ENCODE measurements at regions of chr3 and their contacts with region 1.

Region 1: GRCh38 chr3:142595951-142596725 is at the start of gene PLS1:
- DNase-seq: peak; percentile 88 to 97
- H3K4me3 ChIP-seq: peak within 1 kb of the TSS; percentile 63
- H3K4me3 Mint-ChIP-seq: peak within 1 kb of the TSS; percentile 91
- H3K27ac Mint-ChIP-seq: peak within 1 kb of the TSS; percentile 61
- H3K4me1 ChIP-seq: peaks cover 22% of the 10 kb centered on the region; the same call in 1 of the 2 replicates
- H3K4me1 Mint-ChIP-seq: peaks cover 14% of the 10 kb centered on the region
- H3K27me3 ChIP-seq: no peaks in the 10 kb centered on the region
- H3K27me3 Mint-ChIP-seq: no peaks in the 10 kb centered on the region
- CTCF ChIP-seq: no peak
- total RNA-seq, gene PLS1: 19.2 and 23.6 TPM in 2 replicates

Region 2: GRCh38 chr3:142530296-142530695 is 65.8 kb before region 1 on chr3:
- CTCF ChIA-PET with region 1: no interaction called
- POLR2A ChIA-PET with region 1: no interaction called
- intact Hi-C with region 1: no loop called
- DNase-seq: no peak
- H3K4me3 ChIP-seq: no peak overlapping the region
- H3K4me3 Mint-ChIP-seq: no peak overlapping the region
- H3K27ac Mint-ChIP-seq: no peak overlapping the region
- H3K4me1 ChIP-seq: no peaks in the 10 kb centered on the region
- H3K4me1 Mint-ChIP-seq: no peaks in the 10 kb centered on the region
- H3K27me3 ChIP-seq: no peaks in the 10 kb centered on the region
- H3K27me3 Mint-ChIP-seq: no peaks in the 10 kb centered on the region
- CTCF ChIP-seq: no peak

Region 3: DNA sequence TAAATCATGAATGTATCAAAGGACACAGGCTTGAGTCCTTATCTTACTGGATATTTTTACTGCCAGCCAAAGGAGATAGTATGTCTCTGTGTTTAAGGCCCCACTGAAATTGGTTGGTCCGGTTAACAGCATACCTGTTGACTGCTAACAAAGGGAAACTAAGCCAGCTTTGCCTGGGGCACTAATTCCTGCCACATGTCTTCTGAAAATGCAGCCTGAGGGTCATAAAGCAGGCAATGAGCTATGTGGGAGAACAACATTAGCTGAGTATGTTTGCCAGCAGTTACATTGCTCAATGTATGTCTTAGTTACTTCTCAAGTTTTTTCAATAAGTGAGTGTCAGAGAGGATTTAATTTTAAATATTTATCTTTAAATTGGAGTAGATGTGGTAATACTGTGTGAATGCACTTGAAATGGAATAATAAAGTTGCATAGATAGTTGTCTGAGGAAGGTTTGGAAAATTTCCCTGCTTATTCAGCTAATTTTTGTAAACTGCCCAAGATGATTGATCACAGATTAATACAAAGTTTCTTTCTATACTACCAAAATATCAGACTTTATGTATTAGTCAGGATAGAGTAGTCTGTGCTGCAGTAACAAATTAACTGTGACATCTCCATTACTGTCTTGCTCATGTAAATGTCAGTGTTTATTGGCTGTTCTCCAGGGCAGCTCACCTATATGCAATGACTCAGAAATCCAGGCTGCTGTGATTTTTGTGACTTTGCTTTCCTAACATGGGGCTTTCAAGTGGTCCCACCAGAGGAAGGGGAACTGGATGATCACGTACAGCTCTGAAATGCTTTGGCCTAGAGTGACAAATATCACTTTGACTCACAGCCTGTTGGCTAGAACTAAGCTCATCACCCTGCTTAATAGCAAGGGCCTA is 12.8 kb after region 1 on chr3:
- CTCF ChIA-PET with region 1: no interaction called
- POLR2A ChIA-PET with region 1: interaction called, 5 read pairs
- intact Hi-C with region 1: loop called (anchors 1 kb)
- DNase-seq: peak; percentile 85 to 89
- H3K4me3 ChIP-seq: no peak overlapping the region
- H3K4me3 Mint-ChIP-seq: no peak overlapping the region
- H3K27ac Mint-ChIP-seq: peak overlapping the region; percentile 78
- H3K4me1 ChIP-seq: peaks cover 27% of the 10 kb centered on the region
- H3K4me1 Mint-ChIP-seq: peaks cover 6% of the 10 kb centered on the region
- H3K27me3 ChIP-seq: no peaks in the 10 kb centered on the region
- H3K27me3 Mint-ChIP-seq: no peaks in the 10 kb centered on the region
- CTCF ChIP-seq: no peak

Region 4: DNA sequence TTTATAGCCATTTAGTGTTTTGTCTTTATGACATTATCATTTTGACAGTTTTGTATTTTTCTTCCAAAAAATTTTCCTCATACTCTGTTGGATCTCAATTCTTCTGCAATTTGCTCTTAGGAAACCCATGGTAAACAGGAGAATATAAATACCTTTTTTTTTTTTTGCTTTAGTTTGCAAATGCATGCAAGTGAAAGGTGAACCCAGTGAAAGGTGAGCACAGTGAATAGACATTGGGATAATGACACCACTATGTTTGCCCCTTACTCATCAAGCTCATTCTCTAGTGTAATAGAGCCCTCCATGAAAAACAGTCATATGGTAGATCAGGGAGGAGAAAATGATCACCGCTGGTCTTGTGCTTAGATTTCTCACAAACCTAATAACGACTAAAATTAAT is 68.7 kb after region 1 on chr3:
- CTCF ChIA-PET with region 1: no interaction called
- POLR2A ChIA-PET with region 1: no interaction called
- intact Hi-C with region 1: loop called (anchors 5 kb)
- DNase-seq: no peak
- H3K4me3 ChIP-seq: no peak overlapping the region
- H3K4me3 Mint-ChIP-seq: peak overlapping the region; percentile 35
- H3K27ac Mint-ChIP-seq: no peak overlapping the region
- H3K4me1 ChIP-seq: peaks cover 14% of the 10 kb centered on the region
- H3K4me1 Mint-ChIP-seq: peaks cover 15% of the 10 kb centered on the region
- H3K27me3 ChIP-seq: no peaks in the 10 kb centered on the region
- H3K27me3 Mint-ChIP-seq: no peaks in the 10 kb centered on the region
- CTCF ChIP-seq: no peak

Region 5: DNA sequence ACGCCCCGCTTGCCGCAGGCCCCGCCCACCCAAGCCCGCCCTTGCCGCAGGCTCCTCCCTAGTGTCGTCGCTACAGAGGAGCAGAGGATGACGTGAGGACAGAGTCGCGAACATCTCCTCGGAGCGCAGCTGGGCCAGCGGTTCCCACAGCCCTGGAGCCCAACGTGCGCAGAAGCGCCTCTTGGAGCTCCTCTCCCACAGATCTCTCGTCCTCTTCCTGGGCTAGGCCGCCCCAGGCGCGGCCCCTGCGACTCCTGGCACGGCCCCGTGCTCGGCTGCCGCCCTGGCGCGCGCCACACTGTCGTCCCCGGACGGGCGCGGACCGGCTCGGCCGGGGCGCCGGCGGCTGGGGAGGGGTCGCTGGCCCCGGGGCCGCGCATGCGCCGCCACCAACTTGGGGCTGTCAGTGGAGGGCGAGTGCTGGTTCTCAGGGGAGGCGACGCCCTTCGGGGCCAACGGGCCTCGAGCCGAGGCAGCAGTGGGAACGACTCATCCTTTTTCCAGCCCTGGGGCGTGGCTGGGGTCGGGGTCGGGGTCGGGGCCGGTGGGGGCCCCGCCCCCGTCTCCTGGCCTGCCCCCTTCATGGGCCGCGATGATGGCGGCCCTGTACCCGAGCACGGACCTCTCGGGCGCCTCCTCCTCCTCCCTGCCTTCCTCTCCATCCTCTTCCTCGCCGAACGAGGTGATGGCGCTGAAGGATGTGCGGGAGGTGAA is 128.0 kb after region 1 on chr3 and contains the start of gene TRPC1:
- CTCF ChIA-PET with region 1: no interaction called
- POLR2A ChIA-PET with region 1: interaction called, 4 read pairs
- intact Hi-C with region 1: loop called (anchors 2 kb)
- DNase-seq: peak; percentile 81 to 85
- H3K4me3 ChIP-seq: peak within 1 kb of the TSS; percentile 87
- H3K4me3 Mint-ChIP-seq: peak within 1 kb of the TSS; percentile 91
- H3K27ac Mint-ChIP-seq: peak within 1 kb of the TSS; percentile 94
- H3K4me1 ChIP-seq: peaks cover 10% of the 10 kb centered on the region; the same call in 1 of the 2 replicates
- H3K4me1 Mint-ChIP-seq: no peaks in the 10 kb centered on the region
- H3K27me3 ChIP-seq: no peaks in the 10 kb centered on the region
- H3K27me3 Mint-ChIP-seq: peaks cover 3% of the 10 kb centered on the region
- CTCF ChIP-seq: no peak
- total RNA-seq, gene TRPC1: 7.9 and 8.3 TPM in 2 replicates